HepG2 (cell line): ENCODE measurements at regions of chr7 and their contacts with region 1.

Region 1: GRCh38 chr7:12638851-12639467 is 48.5 kb upstream of the ARL4A start:
- DNase-seq: peak; percentile 43
- ATAC-seq: no peak
- H3K4me3 ChIP-seq: no peak overlapping the region
- H3K27ac ChIP-seq: no peak overlapping the region
- H3K4me1 ChIP-seq: peaks cover 56% of the 10 kb centered on the region
- H3K27me3 ChIP-seq: no peaks in the 10 kb centered on the region
- CTCF ChIP-seq: peak; percentile 63
- EP300 ChIP-seq: no peak
- POLR2A ChIP-seq: no peak
- RAD21 ChIP-seq: peak; percentile 21; the same call in 1 of the 2 replicates

Region 2: GRCh38 chr7:12674849-12675248 is 35.9 kb after region 1 on chr7:
- CTCF ChIA-PET with region 1: no interaction called
- POLR2A ChIA-PET with region 1: interaction called, 3 read pairs
- in situ Hi-C with region 1: loop called (anchors 5 kb)
- intact Hi-C with region 1: loop called (anchors 2 kb)
- DNase-seq: peak; percentile 84
- ATAC-seq: peak; percentile 94
- H3K4me3 ChIP-seq: no peak overlapping the region
- H3K27ac ChIP-seq: no peak overlapping the region
- H3K4me1 ChIP-seq: peaks cover 11% of the 10 kb centered on the region
- H3K27me3 ChIP-seq: no peaks in the 10 kb centered on the region
- CTCF ChIP-seq: peak; percentile 75
- EP300 ChIP-seq: no peak
- POLR2A ChIP-seq: no peak
- RAD21 ChIP-seq: peak; percentile 62

Region 3: GRCh38 chr7:12802098-12802497 is 163.1 kb after region 1 on chr7:
- CTCF ChIA-PET with region 1: no interaction called
- POLR2A ChIA-PET with region 1: no interaction called
- in situ Hi-C with region 1: no loop called
- intact Hi-C with region 1: loop called (anchors 10 kb)
- DNase-seq: no peak
- ATAC-seq: no peak
- H3K4me3 ChIP-seq: no peak overlapping the region
- H3K27ac ChIP-seq: no peak overlapping the region
- H3K4me1 ChIP-seq: peaks cover 16% of the 10 kb centered on the region
- H3K27me3 ChIP-seq: no peaks in the 10 kb centered on the region
- CTCF ChIP-seq: no peak
- EP300 ChIP-seq: no peak
- POLR2A ChIP-seq: no peak
- RAD21 ChIP-seq: no peak

Region 4: GRCh38 chr7:13017333-13017853 is 378.4 kb after region 1 on chr7:
- CTCF ChIA-PET with region 1: no interaction called
- POLR2A ChIA-PET with region 1: interaction called, 4 read pairs
- in situ Hi-C with region 1: loop called (anchors 5 kb)
- intact Hi-C with region 1: loop called (anchors 1 kb)
- DNase-seq: peak; percentile 100
- ATAC-seq: peak; percentile 99
- H3K4me3 ChIP-seq: peak overlapping the region; percentile 3 to 48 (median 27); a peak in 3 of 6 replicates
- H3K27ac ChIP-seq: peak overlapping the region; percentile 97
- H3K4me1 ChIP-seq: peaks cover 65% of the 10 kb centered on the region
- H3K27me3 ChIP-seq: no peaks in the 10 kb centered on the region
- CTCF ChIP-seq: no peak
- EP300 ChIP-seq: peak; percentile 95 to 99
- POLR2A ChIP-seq: peak in 1 of 2 experiments; percentile 19; a peak in 1 of 4 replicates
- RAD21 ChIP-seq: peak; percentile 32; the same call in 1 of the 2 replicates

Region 5: DNA sequence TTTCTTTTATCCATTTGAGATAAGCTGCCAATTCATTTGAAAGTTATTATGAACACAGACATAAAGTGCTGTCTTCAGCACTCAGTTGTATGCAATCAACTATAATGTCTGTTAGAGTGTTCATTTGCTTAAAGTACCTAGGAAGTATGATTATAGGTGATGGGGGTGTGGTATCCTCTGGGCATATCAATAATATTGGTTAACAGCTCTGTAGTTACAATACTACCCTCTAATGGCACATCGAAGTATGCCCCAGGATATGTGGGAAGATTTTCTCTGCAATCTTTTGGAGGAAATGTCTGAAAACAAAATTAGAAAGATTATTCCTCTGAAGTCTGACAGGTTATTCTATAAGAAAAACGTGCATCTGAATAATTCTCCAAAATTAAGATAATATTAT is 478.1 kb after region 1 on chr7:
- CTCF ChIA-PET with region 1: interaction called, 7 read pairs
- POLR2A ChIA-PET with region 1: no interaction called
- in situ Hi-C with region 1: no loop called
- intact Hi-C with region 1: loop called (anchors 1 kb)
- DNase-seq: peak; percentile 35
- ATAC-seq: peak; percentile 69
- H3K4me3 ChIP-seq: no peak overlapping the region
- H3K27ac ChIP-seq: no peak overlapping the region
- H3K4me1 ChIP-seq: peaks cover 10% of the 10 kb centered on the region; the same call in 1 of the 2 replicates
- H3K27me3 ChIP-seq: no peaks in the 10 kb centered on the region
- CTCF ChIP-seq: peak; percentile 70
- EP300 ChIP-seq: no peak
- POLR2A ChIP-seq: no peak
- RAD21 ChIP-seq: peak; percentile 65; the same call in 1 of the 2 replicates

Region 6: GRCh38 chr7:13262929-13263530 is 624.1 kb after region 1 on chr7:
- CTCF ChIA-PET with region 1: interaction called, 27 read pairs
- POLR2A ChIA-PET with region 1: no interaction called
- in situ Hi-C with region 1: loop called (anchors 10 kb)
- intact Hi-C with region 1: loop called (anchors 1 kb)
- DNase-seq: peak; percentile 32
- ATAC-seq: peak; percentile 57
- H3K4me3 ChIP-seq: no peak overlapping the region
- H3K27ac ChIP-seq: no peak overlapping the region
- H3K4me1 ChIP-seq: no peaks in the 10 kb centered on the region
- H3K27me3 ChIP-seq: no peaks in the 10 kb centered on the region
- CTCF ChIP-seq: peak; percentile 64
- EP300 ChIP-seq: no peak
- POLR2A ChIP-seq: no peak
- RAD21 ChIP-seq: peak; percentile 64